ENCODE measurements at regions of chr1 and their contacts with region 1.

Region 1: GRCh38 chr1:183173828-183174227 is 12.2 kb upstream of the LAMC2 start:
- DNase-seq: no peak
- ATAC-seq: no peak
- H3K4me3 ChIP-seq: no peak overlapping the region
- H3K4me3 Mint-ChIP-seq: no peak overlapping the region
- H3K27ac ChIP-seq: no peak overlapping the region
- H3K27ac Mint-ChIP-seq: no peak overlapping the region
- H3K4me1 ChIP-seq: no peaks in the 10 kb centered on the region
- H3K4me1 Mint-ChIP-seq: no peaks in the 10 kb centered on the region
- H3K27me3 ChIP-seq: peaks cover 0 to 3% of the 10 kb centered on the region in 2 donors
- H3K27me3 Mint-ChIP-seq: peaks cover 4 to 9% (median 5%) of the 10 kb centered on the region in 5 donors

Region 2: DNA sequence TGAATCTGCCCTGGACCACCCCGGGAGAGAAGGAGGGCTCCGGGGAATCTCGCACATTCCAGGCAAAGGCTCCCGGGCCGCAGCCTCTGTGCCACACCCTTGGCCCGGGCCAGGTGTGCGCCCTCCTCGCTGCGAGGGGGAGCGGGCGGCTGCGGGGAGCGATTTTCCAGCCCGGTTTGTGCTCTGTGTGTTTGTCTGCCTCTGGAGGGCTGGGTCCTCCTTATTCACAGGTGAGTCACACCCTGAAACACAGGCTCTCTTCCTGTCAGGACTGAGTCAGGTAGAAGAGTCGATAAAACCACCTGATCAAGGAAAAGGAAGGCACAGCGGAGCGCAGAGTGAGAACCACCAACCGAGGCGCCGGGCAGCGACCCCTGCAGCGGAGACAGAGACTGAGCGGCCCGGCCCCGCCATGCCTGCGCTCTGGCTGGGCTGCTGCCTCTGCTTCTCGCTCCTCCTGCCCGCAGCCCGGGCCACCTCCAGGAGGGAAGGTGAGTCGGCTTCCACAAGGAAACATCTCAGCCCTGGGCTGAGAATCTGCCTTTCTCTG is 12.2 kb after region 1 on chr1 and contains the start of gene LAMC2:
- CTCF ChIA-PET with region 1: no interaction called
- POLR2A ChIA-PET with region 1: no interaction called
- intact Hi-C with region 1: no loop called
- DNase-seq: peak in 3 of 9 donors; percentile 6 to 13 (median 11)
- ATAC-seq: no peak
- H3K4me3 ChIP-seq: no peak within 1 kb of the TSS
- H3K4me3 Mint-ChIP-seq: peak within 1 kb of the TSS in 8 of 10 donors; percentile 10 to 75 (median 59)
- H3K27ac ChIP-seq: no peak within 1 kb of the TSS
- H3K27ac Mint-ChIP-seq: no peak within 1 kb of the TSS
- H3K4me1 ChIP-seq: peaks cover 0 to 3% of the 10 kb centered on the region in 2 donors
- H3K4me1 Mint-ChIP-seq: peaks cover 0 to 16% (median 8%) of the 10 kb centered on the region in 7 donors
- H3K27me3 ChIP-seq: no peaks in the 10 kb centered on the region
- H3K27me3 Mint-ChIP-seq: peaks cover 25 to 48% (median 39%) of the 10 kb centered on the region in 5 donors
- total RNA-seq, gene LAMC2: 0.51 TPM in 1 of 5 experiments, not detected in the others

Region 3: GRCh38 chr1:183227963-183228649 is 54.3 kb after region 1 on chr1:
- CTCF ChIA-PET with region 1: interaction called, 3 read pairs
- POLR2A ChIA-PET with region 1: no interaction called
- intact Hi-C with region 1: loop called in 1 of 2 experiments (anchors 5 kb)
- DNase-seq: peak in 5 of 9 donors; percentile 30 to 56 (median 34)
- ATAC-seq: peak; percentile 52
- H3K4me3 ChIP-seq: no peak overlapping the region
- H3K4me3 Mint-ChIP-seq: no peak overlapping the region
- H3K27ac ChIP-seq: no peak overlapping the region
- H3K27ac Mint-ChIP-seq: no peak overlapping the region
- H3K4me1 ChIP-seq: no peaks in the 10 kb centered on the region
- H3K4me1 Mint-ChIP-seq: peaks cover 0 to 5% (median 0%) of the 10 kb centered on the region in 7 donors
- H3K27me3 ChIP-seq: no peaks in the 10 kb centered on the region
- H3K27me3 Mint-ChIP-seq: peaks cover 0 to 6% (median 0%) of the 10 kb centered on the region in 5 donors

Region 4: GRCh38 chr1:183622884-183623785 is 449.3 kb after region 1 on chr1:
- CTCF ChIA-PET with region 1: no interaction called
- POLR2A ChIA-PET with region 1: no interaction called
- intact Hi-C with region 1: loop called in 1 of 2 experiments (anchors 5 kb)
- DNase-seq: peak in 7 of 9 donors; percentile 38 to 67 (median 43)
- ATAC-seq: peak; percentile 96
- H3K4me3 ChIP-seq: no peak overlapping the region
- H3K4me3 Mint-ChIP-seq: no peak overlapping the region
- H3K27ac ChIP-seq: peak overlapping the region; percentile 37
- H3K27ac Mint-ChIP-seq: peak overlapping the region; percentile 1 to 76 (median 58)
- H3K4me1 ChIP-seq: peaks cover 0 to 5% of the 10 kb centered on the region in 2 donors
- H3K4me1 Mint-ChIP-seq: peaks cover 10 to 48% (median 20%) of the 10 kb centered on the region in 7 donors
- H3K27me3 ChIP-seq: no peaks in the 10 kb centered on the region
- H3K27me3 Mint-ChIP-seq: no peaks in the 10 kb centered on the region